PC-9 (cell line): ENCODE measurements at regions of chr17 and their contacts with region 1.

Region 1: DNA sequence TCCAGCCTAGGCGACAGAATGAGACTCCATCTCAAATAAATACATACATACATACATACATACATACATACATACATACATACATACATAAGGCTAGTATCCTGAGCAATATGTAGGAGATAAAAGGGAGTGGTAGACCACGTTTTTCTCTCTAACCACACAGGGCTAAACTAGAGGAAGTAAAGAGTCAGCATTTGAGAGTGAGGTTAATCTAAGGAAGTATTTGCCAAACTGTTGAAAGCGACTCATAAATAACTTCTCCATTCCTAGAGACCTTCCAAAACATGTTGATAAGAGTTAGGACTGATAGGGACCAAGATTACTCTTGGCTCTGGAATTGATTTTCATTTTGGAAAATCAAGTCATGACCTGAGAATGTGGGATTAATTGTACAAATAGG is 68.9 kb downstream of the NEUROD2 start:
- DNase-seq: peak in 1 of 2 experiments; percentile 46
- H3K4me3 ChIP-seq: no peak overlapping the region
- H3K27ac ChIP-seq: no peak overlapping the region
- H3K4me1 ChIP-seq: peaks cover 19% of the 10 kb centered on the region
- H3K27me3 ChIP-seq: no peaks in the 10 kb centered on the region
- CTCF ChIP-seq: no peak

Region 2: GRCh38 chr17:39508987-39509386 is 29.9 kb before region 1 on chr17:
- CTCF ChIA-PET with region 1: no interaction called
- POLR2A ChIA-PET with region 1: interaction called, 10 read pairs
- intact Hi-C with region 1: no loop called
- DNase-seq: no peak
- H3K4me3 ChIP-seq: no peak overlapping the region
- H3K27ac ChIP-seq: no peak overlapping the region
- H3K4me1 ChIP-seq: no peaks in the 10 kb centered on the region
- H3K27me3 ChIP-seq: no peaks in the 10 kb centered on the region
- CTCF ChIP-seq: no peak

Region 3: DNA sequence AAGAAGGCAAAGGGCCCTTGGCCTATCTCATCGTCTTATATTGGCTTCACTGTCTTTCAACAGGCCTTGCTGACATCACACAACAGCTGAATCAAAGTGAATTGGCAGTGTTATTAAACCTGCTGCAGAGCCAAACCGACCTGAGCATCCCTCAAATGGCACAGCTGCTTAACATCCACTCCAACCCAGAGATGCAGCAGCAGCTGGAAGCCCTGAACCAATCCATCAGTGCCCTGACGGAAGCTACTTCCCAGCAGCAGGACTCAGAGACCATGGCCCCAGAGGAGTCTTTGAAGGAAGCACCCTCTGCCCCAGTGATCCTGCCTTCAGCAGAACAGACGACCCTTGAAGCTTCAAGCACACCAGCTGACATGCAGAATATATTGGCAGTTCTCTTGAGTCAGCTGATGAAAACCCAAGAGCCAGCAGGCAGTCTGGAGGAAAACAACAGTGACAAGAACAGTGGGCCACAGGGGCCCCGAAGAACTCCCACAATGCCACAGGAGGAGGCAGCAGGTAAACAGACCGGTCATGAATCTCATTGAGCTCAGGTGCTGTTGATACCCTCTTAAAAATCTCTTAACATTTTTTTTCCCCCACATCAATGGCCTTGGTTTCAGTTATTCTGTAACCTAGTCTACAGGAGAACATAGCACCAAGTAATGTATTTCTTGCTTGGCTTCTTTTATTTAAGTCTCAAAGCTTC is 12.9 kb before region 1 on chr17:
- CTCF ChIA-PET with region 1: no interaction called
- POLR2A ChIA-PET with region 1: no interaction called
- intact Hi-C with region 1: no loop called
- DNase-seq: no peak
- H3K4me3 ChIP-seq: no peak overlapping the region
- H3K27ac ChIP-seq: no peak overlapping the region
- H3K4me1 ChIP-seq: no peaks in the 10 kb centered on the region
- H3K27me3 ChIP-seq: no peaks in the 10 kb centered on the region
- CTCF ChIP-seq: no peak

Region 4: GRCh38 chr17:39636927-39637736 is 98.3 kb after region 1 on chr17 and contains the start of gene STARD3:
- CTCF ChIA-PET with region 1: interaction called, 14 read pairs
- POLR2A ChIA-PET with region 1: no interaction called
- intact Hi-C with region 1: no loop called
- DNase-seq: peak; percentile 74 to 82
- H3K4me3 ChIP-seq: peak within 1 kb of the TSS; percentile 98
- H3K27ac ChIP-seq: peak within 1 kb of the TSS; percentile 64
- H3K4me1 ChIP-seq: peaks cover 26% of the 10 kb centered on the region
- H3K27me3 ChIP-seq: no peaks in the 10 kb centered on the region
- CTCF ChIP-seq: no peak; the same call in 1 of the 2 replicates
- total RNA-seq, gene STARD3: 47.7 and 55.9 TPM in 2 replicates

Region 5: GRCh38 chr17:39652587-39653315 is 113.9 kb after region 1 on chr17:
- CTCF ChIA-PET with region 1: no interaction called
- POLR2A ChIA-PET with region 1: no interaction called
- intact Hi-C with region 1: no loop called
- DNase-seq: no peak
- H3K4me3 ChIP-seq: no peak overlapping the region
- H3K27ac ChIP-seq: no peak overlapping the region
- H3K4me1 ChIP-seq: no peaks in the 10 kb centered on the region
- H3K27me3 ChIP-seq: no peaks in the 10 kb centered on the region
- CTCF ChIP-seq: no peak

Region 6: DNA sequence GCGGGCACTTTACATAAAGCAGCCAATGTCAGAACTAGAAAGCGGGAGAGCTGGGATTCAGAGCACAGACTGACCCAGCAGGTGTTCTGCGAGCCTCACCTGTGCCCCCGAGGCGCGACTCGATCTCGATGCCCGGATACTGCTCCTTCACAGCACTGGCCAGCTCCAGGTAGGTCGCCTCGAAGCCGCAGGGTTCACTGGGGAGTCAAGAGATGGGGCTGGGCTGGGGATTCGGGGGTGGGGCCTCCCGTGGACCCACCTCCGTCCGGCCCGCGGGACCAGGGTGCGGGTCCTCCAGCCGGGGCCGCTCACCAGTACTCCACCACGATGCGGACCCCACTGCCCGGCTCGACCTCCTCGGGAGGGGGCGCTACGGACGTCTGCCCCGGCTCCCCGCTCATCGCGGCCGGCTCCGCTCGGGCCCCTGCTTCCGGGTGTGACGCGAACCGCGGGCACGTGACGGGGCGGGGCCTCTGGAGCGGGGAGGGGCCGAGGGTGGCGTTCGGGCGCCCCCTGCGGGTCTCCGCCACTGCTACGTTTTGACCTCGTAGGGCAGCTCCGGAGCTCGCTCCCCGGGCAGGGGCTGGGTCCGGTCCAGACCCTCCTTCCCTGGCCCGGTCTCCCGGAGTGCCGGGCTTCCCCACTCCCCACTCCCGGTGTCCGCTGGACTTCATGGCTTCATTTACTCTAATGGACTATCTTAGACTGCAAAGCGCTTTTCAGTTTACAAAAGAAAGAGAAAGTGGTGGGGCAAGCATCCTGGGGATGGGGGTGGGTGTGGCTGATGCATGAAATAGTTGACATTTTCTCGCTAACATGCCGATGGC is 191.4 kb after region 1 on chr17 and contains the start of gene MIEN1:
- CTCF ChIA-PET with region 1: no interaction called
- POLR2A ChIA-PET with region 1: interaction called, 11 read pairs
- intact Hi-C with region 1: no loop called
- DNase-seq: peak; percentile 71 to 95
- H3K4me3 ChIP-seq: peak within 1 kb of the TSS; percentile 76
- H3K27ac ChIP-seq: peak within 1 kb of the TSS; percentile 69
- H3K4me1 ChIP-seq: peaks cover 24% of the 10 kb centered on the region
- H3K27me3 ChIP-seq: no peaks in the 10 kb centered on the region
- CTCF ChIP-seq: peak; percentile 88
- total RNA-seq, gene MIEN1: 49.2 and 50.8 TPM in 2 replicates